Activated CD4-positive, alpha-beta memory T cell treated with anti-CD3 and anti-CD28 coated beads, Interleukin-2, amount 10 ng/mL, durations not matched to agents 7 days and 5 days (primary cell): ENCODE measurements at regions of chr7 and their contacts with region 1.

Region 1: DNA sequence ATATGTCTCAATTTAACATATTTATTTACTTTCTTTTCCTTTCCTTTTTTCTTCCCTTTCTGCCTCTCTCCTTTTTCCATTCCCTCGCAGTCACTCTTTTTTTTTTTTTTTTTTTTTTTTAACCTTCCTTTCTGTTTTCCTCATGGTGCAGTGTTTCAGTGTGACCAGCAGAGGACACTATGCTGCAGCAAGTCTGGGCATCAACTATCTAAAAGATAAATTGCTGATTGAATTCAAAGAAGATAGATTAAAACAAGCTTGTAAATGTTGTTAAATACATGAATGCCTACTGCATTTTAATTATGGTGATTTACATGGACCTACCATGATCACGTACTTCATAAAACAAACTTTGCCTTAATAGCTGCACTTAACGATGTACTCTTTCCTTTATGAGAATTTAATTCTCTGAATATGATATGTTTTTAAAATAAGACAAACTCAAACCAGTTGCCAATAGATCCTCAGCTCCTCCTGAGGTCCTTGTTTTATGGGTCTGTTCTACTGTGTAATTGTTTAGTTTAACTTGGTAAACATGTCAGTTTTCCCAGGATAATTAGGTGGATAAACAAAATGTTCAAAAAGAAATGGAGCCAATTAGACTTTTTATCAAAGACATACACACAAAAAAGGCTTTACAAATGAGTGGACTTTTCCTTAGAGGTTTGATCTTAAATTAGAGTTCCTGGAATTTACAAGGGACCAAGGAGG is 101.0 kb upstream of the AGR3 start:
- DNase-seq: peak; percentile 42
- H3K4me3 Mint-ChIP-seq: no peak overlapping the region
- H3K27ac Mint-ChIP-seq: no peak overlapping the region
- H3K4me1 Mint-ChIP-seq: peaks cover 7% of the 10 kb centered on the region
- H3K27me3 Mint-ChIP-seq: peaks cover 13% of the 10 kb centered on the region

Region 2: DNA sequence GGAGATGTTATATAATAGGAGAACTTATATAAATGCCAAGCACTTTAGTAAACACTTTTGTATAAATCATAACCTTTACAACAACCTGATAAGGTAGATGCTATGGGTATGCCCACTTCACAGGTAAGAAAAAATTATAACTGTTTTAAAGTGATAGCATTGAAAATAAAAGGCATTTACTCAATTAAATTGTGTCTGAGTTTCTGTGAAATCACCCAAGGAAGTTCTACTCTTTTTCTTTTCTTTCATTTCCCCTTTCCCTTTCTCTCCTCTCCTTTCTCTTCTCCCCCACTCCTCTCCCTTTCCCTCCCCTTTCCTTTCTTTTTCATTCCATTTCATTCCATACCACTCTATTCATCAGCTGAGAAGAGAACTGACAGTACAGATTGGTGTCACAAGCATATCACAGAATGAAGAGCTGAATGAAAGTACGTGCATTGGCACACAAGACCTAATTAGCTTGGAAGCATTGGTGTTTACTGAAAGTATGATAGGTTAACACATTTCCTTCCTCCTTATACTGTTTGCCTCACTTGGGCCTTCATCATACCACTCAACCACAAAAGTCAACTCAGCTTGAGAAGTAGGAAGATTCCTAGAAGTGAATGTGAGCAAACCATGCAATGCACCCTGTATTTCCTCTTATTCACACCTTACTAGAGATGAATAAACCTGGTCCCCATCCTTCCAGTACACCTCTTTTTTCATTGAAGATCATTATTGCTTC is 16.9 kb after region 1 on chr7:
- CTCF ChIA-PET with region 1: interaction called, 17 read pairs
- POLR2A ChIA-PET with region 1: no interaction called
- DNase-seq: peak; percentile 33
- H3K4me3 Mint-ChIP-seq: peak overlapping the region; percentile 66
- H3K27ac Mint-ChIP-seq: peak overlapping the region; percentile 85
- H3K4me1 Mint-ChIP-seq: peaks cover 23% of the 10 kb centered on the region
- H3K27me3 Mint-ChIP-seq: peaks cover 3% of the 10 kb centered on the region

Region 3: DNA sequence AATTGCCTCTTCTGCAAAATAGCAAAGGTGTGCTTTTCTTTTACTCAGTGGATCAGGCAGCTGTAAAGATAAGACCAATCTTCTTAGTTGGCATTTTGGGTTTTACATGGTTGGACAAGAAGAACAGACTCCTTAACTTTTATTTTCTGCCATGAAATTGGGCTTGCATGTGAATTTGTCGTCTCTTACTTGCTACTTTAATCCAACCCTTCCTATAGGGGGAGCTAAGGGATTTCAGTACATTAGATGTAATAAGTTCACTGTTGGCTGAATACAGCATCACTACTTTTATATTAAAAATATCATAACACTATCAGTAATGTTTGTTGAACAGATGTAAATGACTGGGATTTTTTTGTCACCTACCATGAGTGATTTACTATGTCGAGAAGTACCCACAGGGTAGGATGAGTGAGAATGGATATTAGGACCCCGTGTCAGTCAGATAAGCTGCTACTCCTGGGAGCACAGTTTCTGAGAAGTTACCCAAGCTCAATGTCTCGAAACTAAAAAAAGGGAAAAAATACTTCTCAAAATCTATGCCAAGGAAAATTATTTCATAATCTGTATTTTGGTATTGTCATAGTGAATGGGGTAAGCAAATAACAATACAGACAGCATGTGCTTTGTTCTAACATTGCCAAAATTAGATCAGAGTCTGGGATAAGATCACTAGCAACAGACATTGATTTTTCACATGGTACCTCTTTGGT is 26.4 kb after region 1 on chr7:
- CTCF ChIA-PET with region 1: interaction called, 23 read pairs
- POLR2A ChIA-PET with region 1: no interaction called
- DNase-seq: no peak
- H3K4me3 Mint-ChIP-seq: no peak overlapping the region
- H3K27ac Mint-ChIP-seq: no peak overlapping the region
- H3K4me1 Mint-ChIP-seq: peaks cover 33% of the 10 kb centered on the region
- H3K27me3 Mint-ChIP-seq: peaks cover 1% of the 10 kb centered on the region

Region 4: GRCh38 chr7:17058568-17058967 is 75.8 kb after region 1 on chr7:
- CTCF ChIA-PET with region 1: interaction called, 11 read pairs
- POLR2A ChIA-PET with region 1: no interaction called
- DNase-seq: no peak
- H3K4me3 Mint-ChIP-seq: no peak overlapping the region
- H3K27ac Mint-ChIP-seq: peak overlapping the region; percentile 5
- H3K4me1 Mint-ChIP-seq: peaks cover 30% of the 10 kb centered on the region
- H3K27me3 Mint-ChIP-seq: no peaks in the 10 kb centered on the region